ENCODE measurements at regions of chr22 and their contacts with region 1.

Region 1: GRCh38 chr22:22371031-22371541 is 126.5 kb downstream of the VPREB1 start:
- DNase-seq: no peak
- H3K4me3 ChIP-seq: no peak overlapping the region
- H3K27ac ChIP-seq: no peak overlapping the region
- H3K4me1 ChIP-seq: no peaks in the 10 kb centered on the region
- H3K27me3 ChIP-seq: peaks cover 2% of the 10 kb centered on the region
- CTCF ChIP-seq: no peak

Region 2: GRCh38 chr22:22327723-22328122 is 43.4 kb before region 1 on chr22:
- CTCF ChIA-PET with region 1: no interaction called
- dilution Hi-C with region 1: no loop called
- in situ Hi-C with region 1: no loop called
- intact Hi-C with region 1: no loop called
- DNase-seq: no peak
- H3K4me3 ChIP-seq: no peak overlapping the region
- H3K27ac ChIP-seq: no peak overlapping the region
- H3K4me1 ChIP-seq: no peaks in the 10 kb centered on the region
- H3K27me3 ChIP-seq: no peaks in the 10 kb centered on the region
- CTCF ChIP-seq: no peak

Region 3: GRCh38 chr22:22348127-22348814 is 22.8 kb before region 1 on chr22:
- CTCF ChIA-PET with region 1: no interaction called
- dilution Hi-C with region 1: no loop called
- in situ Hi-C with region 1: no loop called
- intact Hi-C with region 1: loop called (anchors 1 kb)
- DNase-seq: no peak
- H3K4me3 ChIP-seq: no peak overlapping the region
- H3K27ac ChIP-seq: no peak overlapping the region
- H3K4me1 ChIP-seq: no peaks in the 10 kb centered on the region
- H3K27me3 ChIP-seq: no peaks in the 10 kb centered on the region
- CTCF ChIP-seq: peak in 1 of 2 donors; percentile 34

Region 4: GRCh38 chr22:22446517-22446916 is 75.4 kb after region 1 on chr22:
- CTCF ChIA-PET with region 1: no interaction called
- dilution Hi-C with region 1: loop called (anchors 5 kb)
- in situ Hi-C with region 1: no loop called
- intact Hi-C with region 1: no loop called
- DNase-seq: no peak
- H3K4me3 ChIP-seq: no peak overlapping the region
- H3K27ac ChIP-seq: no peak overlapping the region
- H3K4me1 ChIP-seq: no peaks in the 10 kb centered on the region
- H3K27me3 ChIP-seq: no peaks in the 10 kb centered on the region
- CTCF ChIP-seq: no peak